Sigmoid colon (tissue), 7 donors: ENCODE measurements at regions of chr12 and their contacts with region 1.

Region 1: DNA sequence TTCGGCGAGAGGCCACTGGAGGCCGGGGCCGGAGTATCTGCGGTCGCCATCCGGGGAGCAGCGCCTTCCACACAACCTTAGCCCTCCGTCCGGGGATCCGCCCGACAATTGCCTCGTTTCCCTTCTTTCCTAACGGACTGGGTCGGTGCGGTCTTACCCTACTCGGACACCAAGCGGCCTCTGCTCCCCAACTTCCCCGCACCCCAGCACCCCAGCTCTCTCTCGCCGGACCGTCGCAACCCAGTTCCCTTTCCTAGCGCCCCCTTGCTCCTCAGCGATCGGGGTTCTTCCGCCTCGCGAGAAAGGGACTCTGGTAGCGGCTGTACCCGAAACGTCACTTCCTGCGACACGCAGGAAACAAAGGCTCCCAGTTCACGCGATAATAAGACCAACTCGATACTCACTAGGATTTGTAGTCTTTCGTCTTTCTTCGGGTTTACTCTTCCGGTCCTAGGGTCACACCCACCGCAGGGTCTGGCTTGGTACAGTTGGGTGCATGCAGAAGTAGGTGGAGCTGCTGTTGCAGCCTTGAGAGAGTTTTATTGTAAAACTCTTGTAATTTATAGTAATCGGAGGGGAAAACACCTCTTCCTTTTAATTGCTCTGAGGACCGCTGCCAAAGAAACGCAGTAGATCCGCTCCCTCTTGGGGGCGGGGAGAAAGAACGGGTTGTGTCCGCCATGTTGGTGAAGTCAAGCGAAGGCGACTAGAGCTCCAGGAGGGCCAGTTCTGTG is at the start of gene ZFC3H1:
- DNase-seq: peak; percentile 98
- H3K4me3 ChIP-seq: peak within 1 kb of the TSS; percentile 73 to 90 (median 86)
- H3K27ac ChIP-seq: peak within 1 kb of the TSS; percentile 91 to 99 (median 97)
- H3K4me1 ChIP-seq: peaks cover 3 to 43% (median 24%) of the 10 kb centered on the region in 4 donors
- H3K27me3 ChIP-seq: no peaks in the 10 kb centered on the region
- CTCF ChIP-seq: no peak
- EP300 ChIP-seq: no peak
- POLR2A ChIP-seq: peak; percentile 94 to 96
- total RNA-seq, gene ZFC3H1: 38.7 to 87.8 (median 52.3) TPM

Region 2: DNA sequence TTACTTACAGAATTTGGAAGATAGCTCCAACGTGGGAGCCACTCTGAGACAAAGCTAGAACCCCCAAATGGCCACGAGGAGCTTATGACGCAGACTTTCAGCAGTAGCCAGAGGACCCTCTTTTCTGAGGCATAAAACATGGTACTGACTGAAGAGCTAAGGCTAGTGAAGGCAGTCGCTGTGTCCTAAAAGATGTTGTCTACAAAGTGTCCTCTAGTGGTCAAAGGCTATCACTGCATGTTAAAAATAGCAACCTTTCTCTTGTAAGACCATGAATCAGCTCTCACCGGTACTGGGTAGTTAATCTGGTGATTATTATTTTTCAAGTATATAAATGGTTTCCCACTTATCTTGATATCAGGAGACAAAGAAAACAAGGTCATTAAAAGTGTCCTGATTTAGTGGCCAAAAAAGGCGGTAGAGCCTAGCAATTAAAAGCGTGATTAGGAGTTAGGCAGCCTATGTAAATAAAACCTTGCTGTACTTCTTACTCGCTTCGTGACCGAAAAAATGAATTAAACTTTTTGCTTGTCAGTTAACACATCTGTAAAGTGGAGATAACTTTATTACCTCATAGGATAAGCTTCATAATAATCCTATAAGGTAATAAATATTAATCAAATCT is 271.1 kb before region 1 on chr12:
- intact Hi-C with region 1: no loop called
- DNase-seq: no peak
- H3K4me3 ChIP-seq: no peak overlapping the region
- H3K27ac ChIP-seq: no peak overlapping the region
- H3K4me1 ChIP-seq: no peaks in the 10 kb centered on the region
- H3K27me3 ChIP-seq: no peaks in the 10 kb centered on the region
- CTCF ChIP-seq: peak; percentile 23 to 75 (median 56)
- EP300 ChIP-seq: no peak
- POLR2A ChIP-seq: no peak

Region 3: DNA sequence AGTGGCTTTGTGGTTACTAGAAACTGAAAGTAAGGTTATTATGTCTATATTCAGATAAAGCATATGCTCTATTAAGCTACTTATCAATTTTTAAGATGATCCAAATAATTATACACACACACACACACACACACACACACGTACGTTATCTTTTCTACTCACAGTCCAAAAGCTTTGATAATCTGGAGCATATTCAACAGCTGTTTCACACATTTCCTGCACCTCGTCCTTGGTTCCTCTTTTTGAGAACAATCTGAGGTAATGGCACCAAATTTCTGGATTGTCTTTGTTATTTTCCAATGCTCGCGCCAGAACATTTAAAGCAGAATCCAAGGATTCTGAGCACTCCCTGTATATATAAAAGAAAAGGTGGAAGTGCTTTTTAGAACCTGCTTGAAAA is 37.6 kb before region 1 on chr12:
- intact Hi-C with region 1: loop called (anchors 5 kb)
- DNase-seq: no peak
- H3K4me3 ChIP-seq: no peak overlapping the region
- H3K27ac ChIP-seq: no peak overlapping the region
- H3K4me1 ChIP-seq: peaks cover 0 to 4% (median 0%) of the 10 kb centered on the region in 4 donors
- H3K27me3 ChIP-seq: no peaks in the 10 kb centered on the region
- CTCF ChIP-seq: no peak
- EP300 ChIP-seq: no peak
- POLR2A ChIP-seq: no peak

Region 4: GRCh38 chr12:71685914-71686665 is 22.4 kb after region 1 on chr12 and contains the start of gene TMEM19:
- intact Hi-C with region 1: loop called (anchors 2 kb)
- DNase-seq: peak; percentile 94
- H3K4me3 ChIP-seq: peak within 1 kb of the TSS; percentile 71 to 85 (median 74)
- H3K27ac ChIP-seq: peak within 1 kb of the TSS; percentile 91 to 95 (median 92)
- H3K4me1 ChIP-seq: peaks cover 0 to 34% (median 25%) of the 10 kb centered on the region in 4 donors
- H3K27me3 ChIP-seq: no peaks in the 10 kb centered on the region
- CTCF ChIP-seq: peak in 1 of 4 experiments; percentile 22
- EP300 ChIP-seq: no peak
- POLR2A ChIP-seq: peak; percentile 22 to 48
- total RNA-seq, gene TMEM19: 10.7 to 23.5 (median 12.7) TPM

Region 5: GRCh38 chr12:71754461-71755145 is 90.9 kb after region 1 on chr12 and contains the start of gene RAB21:
- intact Hi-C with region 1: loop called (anchors 2 kb)
- DNase-seq: peak; percentile 99
- H3K4me3 ChIP-seq: peak within 1 kb of the TSS; percentile 79 to 85 (median 82)
- H3K27ac ChIP-seq: peak within 1 kb of the TSS; percentile 94 to 97 (median 95)
- H3K4me1 ChIP-seq: peaks cover 0 to 31% (median 26%) of the 10 kb centered on the region in 4 donors
- H3K27me3 ChIP-seq: peaks cover 0 to 5% (median 0%) of the 10 kb centered on the region in 3 donors
- CTCF ChIP-seq: peak in 3 of 4 experiments; percentile 40 to 63 (median 43)
- EP300 ChIP-seq: peak in 1 of 4 donors; percentile 18
- POLR2A ChIP-seq: peak; percentile 84 to 93
- total RNA-seq, gene RAB21: 12.8 to 19.1 (median 15.7) TPM

Region 6: GRCh38 chr12:71780237-71780822 is 116.6 kb after region 1 on chr12:
- intact Hi-C with region 1: no loop called
- DNase-seq: no peak
- H3K4me3 ChIP-seq: no peak overlapping the region
- H3K27ac ChIP-seq: peak overlapping the region in 2 of 4 donors; percentile 14 to 25
- H3K4me1 ChIP-seq: peaks cover 0 to 14% (median 3%) of the 10 kb centered on the region in 4 donors
- H3K27me3 ChIP-seq: no peaks in the 10 kb centered on the region
- CTCF ChIP-seq: peak; percentile 27 to 63 (median 60)
- EP300 ChIP-seq: no peak
- POLR2A ChIP-seq: no peak

Region 7: DNA sequence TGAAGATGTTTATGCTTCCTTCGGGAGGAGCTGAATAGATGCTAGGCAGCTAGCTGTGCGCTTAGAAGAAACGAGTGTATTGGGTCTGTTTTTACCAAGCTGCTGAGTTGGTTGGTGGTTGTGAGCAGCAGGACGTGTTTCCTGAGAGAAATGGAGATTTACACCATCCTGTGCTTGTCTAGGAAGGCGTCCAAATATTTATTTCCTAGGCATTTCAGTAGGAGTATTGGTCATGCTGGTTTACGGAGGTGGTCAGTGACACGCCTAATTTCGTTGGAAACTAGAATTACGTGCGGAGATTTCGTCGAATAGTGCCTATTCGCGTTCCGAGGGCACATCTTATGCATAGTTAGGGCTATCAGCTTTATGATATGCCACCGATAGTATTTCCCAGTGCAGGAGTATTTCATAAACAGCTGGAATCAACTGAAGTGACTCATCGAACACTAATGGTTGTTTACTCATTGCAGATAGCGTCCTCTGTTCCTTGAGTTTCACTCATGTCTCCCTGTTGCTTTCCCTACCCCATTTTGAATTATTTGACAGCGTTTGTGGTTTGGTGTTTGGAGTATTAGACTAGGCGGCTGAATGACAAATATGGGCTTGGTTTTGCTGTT is 176.6 kb after region 1 on chr12:
- intact Hi-C with region 1: loop called (anchors 5 kb)
- DNase-seq: no peak
- H3K4me3 ChIP-seq: peak overlapping the region; percentile 56 to 75 (median 71)
- H3K27ac ChIP-seq: peak overlapping the region; percentile 84 to 96 (median 94)
- H3K4me1 ChIP-seq: peaks cover 0 to 44% (median 34%) of the 10 kb centered on the region in 4 donors
- H3K27me3 ChIP-seq: no peaks in the 10 kb centered on the region
- CTCF ChIP-seq: no peak
- EP300 ChIP-seq: no peak
- POLR2A ChIP-seq: no peak